ENCODE measurements at regions of chr1 and their contacts with region 1.

Region 1: DNA sequence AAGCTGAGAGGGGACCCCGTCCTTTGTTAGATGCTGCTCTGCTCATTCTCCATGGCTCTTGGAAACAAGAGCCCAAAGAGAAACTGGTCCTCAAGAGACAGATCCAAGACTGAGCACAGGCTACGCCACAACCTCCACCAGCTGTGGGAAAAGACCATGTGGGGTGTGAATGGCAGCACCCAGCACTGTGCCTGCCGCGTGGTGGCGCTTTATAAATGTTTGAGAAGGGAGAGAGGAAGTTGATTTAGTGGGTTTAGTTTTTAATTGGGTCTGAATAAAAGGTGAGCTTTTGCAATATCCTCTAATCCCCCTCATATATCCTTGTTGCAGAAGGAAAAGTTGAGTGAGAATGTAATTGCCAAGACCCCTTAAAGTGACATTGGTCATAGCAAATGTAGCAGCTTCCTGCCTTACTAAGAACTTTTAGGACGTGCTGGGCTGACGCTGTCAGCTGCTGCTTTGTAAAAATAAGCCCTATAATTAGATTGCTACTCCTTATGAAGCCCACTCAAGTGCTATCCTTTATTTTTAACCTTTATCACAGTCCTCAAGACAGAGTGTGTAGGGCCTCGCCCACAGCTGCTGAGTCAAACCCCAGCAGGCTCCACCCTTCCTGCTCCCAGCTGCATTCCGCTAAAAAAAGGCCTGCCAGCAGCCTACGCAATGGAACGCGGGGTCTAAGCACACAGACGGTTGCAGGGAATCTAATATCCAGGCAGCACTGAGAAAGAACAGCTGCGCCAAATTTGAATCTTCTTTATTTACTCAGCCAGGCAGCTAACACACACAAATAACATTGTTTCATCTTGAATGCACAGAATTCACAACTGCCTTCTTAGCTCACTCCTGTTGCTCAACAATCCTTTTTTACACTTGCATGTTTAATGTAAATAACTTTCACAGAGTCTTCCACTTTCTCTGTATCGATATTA is 47.4 kb upstream of the PRDX6 start:
- DNase-seq: peak; percentile 69 to 85
- H3K4me3 ChIP-seq: peak overlapping the region; percentile 42
- H3K27ac ChIP-seq: peak overlapping the region; percentile 76
- H3K4me1 ChIP-seq: peaks cover 68% of the 10 kb centered on the region
- H3K27me3 ChIP-seq: no peaks in the 10 kb centered on the region
- CTCF ChIP-seq: no peak

Region 2: GRCh38 chr1:172990598-172991215 is 439.0 kb before region 1 on chr1:
- CTCF ChIA-PET with region 1: no interaction called
- POLR2A ChIA-PET with region 1: no interaction called
- intact Hi-C with region 1: no loop called
- DNase-seq: no peak
- H3K4me3 ChIP-seq: no peak overlapping the region
- H3K27ac ChIP-seq: no peak overlapping the region
- H3K4me1 ChIP-seq: no peaks in the 10 kb centered on the region
- H3K27me3 ChIP-seq: no peaks in the 10 kb centered on the region
- CTCF ChIP-seq: no peak

Region 3: GRCh38 chr1:173050865-173051264 is 378.9 kb before region 1 on chr1 and contains the start of gene TNFSF18:
- CTCF ChIA-PET with region 1: no interaction called
- POLR2A ChIA-PET with region 1: no interaction called
- intact Hi-C with region 1: loop called (anchors 10 kb)
- DNase-seq: no peak
- H3K4me3 ChIP-seq: no peak within 1 kb of the TSS
- H3K27ac ChIP-seq: peak within 1 kb of the TSS; percentile 87; the same call in 1 of the 2 replicates
- H3K4me1 ChIP-seq: peaks cover 36% of the 10 kb centered on the region
- H3K27me3 ChIP-seq: no peaks in the 10 kb centered on the region
- CTCF ChIP-seq: no peak
- total RNA-seq, gene TNFSF18: 0.81 TPM in 1 of 2 replicates, not detected in the other

Region 4: GRCh38 chr1:173175514-173176145 is 254.1 kb before region 1 on chr1:
- CTCF ChIA-PET with region 1: no interaction called
- POLR2A ChIA-PET with region 1: no interaction called
- intact Hi-C with region 1: no loop called
- DNase-seq: no peak
- H3K4me3 ChIP-seq: no peak overlapping the region
- H3K27ac ChIP-seq: no peak overlapping the region
- H3K4me1 ChIP-seq: no peaks in the 10 kb centered on the region
- H3K27me3 ChIP-seq: no peaks in the 10 kb centered on the region
- CTCF ChIP-seq: no peak

Region 5: GRCh38 chr1:173603056-173603620 is 173.4 kb after region 1 on chr1 and contains the start of gene SLC9C2:
- CTCF ChIA-PET with region 1: no interaction called
- POLR2A ChIA-PET with region 1: no interaction called
- intact Hi-C with region 1: no loop called
- DNase-seq: no peak
- H3K4me3 ChIP-seq: no peak within 1 kb of the TSS
- H3K27ac ChIP-seq: no peak within 1 kb of the TSS
- H3K4me1 ChIP-seq: no peaks in the 10 kb centered on the region
- H3K27me3 ChIP-seq: no peaks in the 10 kb centered on the region
- CTCF ChIP-seq: no peak
- total RNA-seq, gene SLC9C2: not detected in 2 replicates

Region 6: GRCh38 chr1:173714759-173715537 is 285.2 kb after region 1 on chr1 and contains the start of gene KLHL20:
- CTCF ChIA-PET with region 1: no interaction called
- POLR2A ChIA-PET with region 1: no interaction called
- intact Hi-C with region 1: loop called (anchors 2 kb)
- DNase-seq: peak; percentile 85 to 89
- H3K4me3 ChIP-seq: peak within 1 kb of the TSS; percentile 67
- H3K27ac ChIP-seq: peak within 1 kb of the TSS; percentile 56
- H3K4me1 ChIP-seq: peaks cover 28% of the 10 kb centered on the region
- H3K27me3 ChIP-seq: no peaks in the 10 kb centered on the region
- CTCF ChIP-seq: no peak
- total RNA-seq, gene KLHL20: 11.5 and 15.3 TPM in 2 replicates

Region 7: GRCh38 chr1:173960625-173961024 is 530.9 kb after region 1 on chr1:
- CTCF ChIA-PET with region 1: no interaction called
- POLR2A ChIA-PET with region 1: no interaction called
- intact Hi-C with region 1: loop called (anchors 10 kb)
- DNase-seq: no peak
- H3K4me3 ChIP-seq: no peak overlapping the region
- H3K27ac ChIP-seq: no peak overlapping the region
- H3K4me1 ChIP-seq: no peaks in the 10 kb centered on the region
- H3K27me3 ChIP-seq: no peaks in the 10 kb centered on the region
- CTCF ChIP-seq: no peak

Region 8: GRCh38 chr1:174743654-174744561 is 1314.2 kb after region 1 on chr1:
- CTCF ChIA-PET with region 1: no interaction called
- POLR2A ChIA-PET with region 1: no interaction called
- intact Hi-C with region 1: loop called (anchors 10 kb)
- DNase-seq: peak in 1 of 2 experiments; percentile 52
- H3K4me3 ChIP-seq: no peak overlapping the region
- H3K27ac ChIP-seq: no peak overlapping the region
- H3K4me1 ChIP-seq: peaks cover 21% of the 10 kb centered on the region
- H3K27me3 ChIP-seq: no peaks in the 10 kb centered on the region
- CTCF ChIP-seq: peak; percentile 75

Measured in PC-9 (cell line).